Endothelial cell of umbilical vein (primary cell): ENCODE measurements at regions of chr4 and their contacts with region 1.

Region 1: DNA sequence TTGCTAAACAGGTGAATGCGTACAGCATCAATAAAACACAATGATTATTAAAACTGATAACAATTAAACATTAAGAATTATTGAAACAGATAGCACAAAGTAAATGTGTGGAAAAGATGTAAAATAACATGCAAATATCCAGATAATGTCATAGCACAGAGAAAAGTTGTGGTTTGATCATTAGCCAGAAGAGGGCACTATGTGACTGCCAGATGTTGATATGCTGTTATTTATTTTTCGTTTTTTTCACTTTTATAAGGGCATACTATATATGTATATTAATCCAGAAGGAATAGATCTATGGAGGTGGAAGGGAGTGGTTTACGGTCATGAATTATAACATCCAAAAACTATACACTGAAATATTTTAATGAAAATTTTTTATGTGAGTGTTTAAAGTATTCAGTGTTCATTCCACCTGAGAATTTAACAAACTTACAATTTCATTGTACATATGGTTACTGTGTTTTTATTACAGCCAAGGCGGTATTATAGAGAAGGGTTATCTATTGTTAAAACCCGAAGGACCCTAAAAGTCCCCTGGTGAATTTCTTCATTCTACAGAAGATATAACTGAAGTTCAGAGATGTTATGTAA is 211.9 kb upstream of the UGT8 start:
- DNase-seq: peak; percentile 59
- H3K4me3 ChIP-seq: no peak overlapping the region
- H3K27ac ChIP-seq: no peak overlapping the region
- H3K4me1 ChIP-seq: no peaks in the 10 kb centered on the region
- H3K27me3 ChIP-seq: peaks cover 5 to 11% of the 10 kb centered on the region in 2 experiments
- CTCF ChIP-seq: peak; percentile 37 to 50
- POLR2A ChIP-seq: no peak

Region 2: GRCh38 chr4:113878668-113879067 is 508.1 kb before region 1 on chr4:
- CTCF ChIA-PET with region 1: no interaction called
- POLR2A ChIA-PET with region 1: no interaction called
- dilution Hi-C with region 1: no loop called
- intact Hi-C with region 1: loop called (anchors 5 kb)
- DNase-seq: peak; percentile 40
- H3K4me3 ChIP-seq: no peak overlapping the region
- H3K27ac ChIP-seq: no peak overlapping the region
- H3K4me1 ChIP-seq: peaks cover 16% of the 10 kb centered on the region
- H3K27me3 ChIP-seq: no peaks in the 10 kb centered on the region
- CTCF ChIP-seq: peak; percentile 25 to 30
- POLR2A ChIP-seq: no peak

Region 3: GRCh38 chr4:114077610-114078009 is 309.1 kb before region 1 on chr4:
- CTCF ChIA-PET with region 1: no interaction called
- POLR2A ChIA-PET with region 1: no interaction called
- dilution Hi-C with region 1: no loop called
- intact Hi-C with region 1: loop called (anchors 5 kb)
- DNase-seq: peak; percentile 92
- H3K4me3 ChIP-seq: no peak overlapping the region
- H3K27ac ChIP-seq: peak overlapping the region; percentile 58
- H3K4me1 ChIP-seq: peaks cover 13% of the 10 kb centered on the region
- H3K27me3 ChIP-seq: no peaks in the 10 kb centered on the region
- CTCF ChIP-seq: no peak
- POLR2A ChIP-seq: no peak

Region 4: DNA sequence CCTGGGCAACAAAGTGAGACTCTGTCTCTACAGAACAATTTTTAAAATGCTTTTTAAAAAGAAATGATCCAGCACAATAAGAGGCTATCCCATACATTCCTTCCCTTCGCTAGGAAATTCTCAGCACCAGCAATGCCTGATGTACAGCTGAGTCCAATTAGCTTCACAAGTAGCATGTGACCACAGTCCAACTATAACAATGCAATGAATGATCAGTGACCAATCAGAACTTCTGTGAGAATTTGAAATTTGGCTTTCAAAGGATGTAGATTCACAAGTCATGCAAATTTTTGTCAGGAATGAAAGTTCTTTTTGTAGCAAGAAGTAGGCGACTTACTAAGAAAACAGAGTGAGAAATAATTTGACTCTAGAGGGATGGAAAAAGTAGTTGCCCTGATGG is 66.6 kb before region 1 on chr4:
- CTCF ChIA-PET with region 1: no interaction called
- POLR2A ChIA-PET with region 1: no interaction called
- dilution Hi-C with region 1: no loop called
- intact Hi-C with region 1: no loop called
- DNase-seq: no peak
- H3K4me3 ChIP-seq: no peak overlapping the region
- H3K27ac ChIP-seq: no peak overlapping the region
- H3K4me1 ChIP-seq: no peaks in the 10 kb centered on the region
- H3K27me3 ChIP-seq: no peaks in the 10 kb centered on the region
- CTCF ChIP-seq: no peak
- POLR2A ChIP-seq: no peak

Region 5: DNA sequence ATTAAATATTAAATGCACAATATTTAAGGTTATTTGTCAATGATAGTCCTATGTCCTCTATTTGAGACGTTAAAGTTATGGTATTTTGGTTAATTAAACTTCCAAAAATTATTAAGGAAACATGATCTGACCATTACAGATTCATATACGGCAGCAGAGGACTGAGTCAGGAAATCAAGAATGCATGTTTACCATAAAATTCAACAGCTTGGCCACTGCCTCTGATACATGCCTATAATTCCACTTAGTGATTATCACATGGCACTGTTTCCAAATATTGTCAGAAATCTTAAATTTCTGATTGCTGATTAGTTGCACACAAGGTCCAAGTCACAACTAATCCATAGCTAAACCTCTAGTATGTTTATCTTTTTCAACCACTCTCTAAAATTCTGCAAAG is 20.4 kb before region 1 on chr4:
- CTCF ChIA-PET with region 1: no interaction called
- POLR2A ChIA-PET with region 1: no interaction called
- dilution Hi-C with region 1: no loop called
- intact Hi-C with region 1: no loop called
- DNase-seq: no peak
- H3K4me3 ChIP-seq: no peak overlapping the region
- H3K27ac ChIP-seq: no peak overlapping the region
- H3K4me1 ChIP-seq: no peaks in the 10 kb centered on the region
- H3K27me3 ChIP-seq: no peaks in the 10 kb centered on the region
- CTCF ChIP-seq: no peak
- POLR2A ChIP-seq: no peak

Region 6: DNA sequence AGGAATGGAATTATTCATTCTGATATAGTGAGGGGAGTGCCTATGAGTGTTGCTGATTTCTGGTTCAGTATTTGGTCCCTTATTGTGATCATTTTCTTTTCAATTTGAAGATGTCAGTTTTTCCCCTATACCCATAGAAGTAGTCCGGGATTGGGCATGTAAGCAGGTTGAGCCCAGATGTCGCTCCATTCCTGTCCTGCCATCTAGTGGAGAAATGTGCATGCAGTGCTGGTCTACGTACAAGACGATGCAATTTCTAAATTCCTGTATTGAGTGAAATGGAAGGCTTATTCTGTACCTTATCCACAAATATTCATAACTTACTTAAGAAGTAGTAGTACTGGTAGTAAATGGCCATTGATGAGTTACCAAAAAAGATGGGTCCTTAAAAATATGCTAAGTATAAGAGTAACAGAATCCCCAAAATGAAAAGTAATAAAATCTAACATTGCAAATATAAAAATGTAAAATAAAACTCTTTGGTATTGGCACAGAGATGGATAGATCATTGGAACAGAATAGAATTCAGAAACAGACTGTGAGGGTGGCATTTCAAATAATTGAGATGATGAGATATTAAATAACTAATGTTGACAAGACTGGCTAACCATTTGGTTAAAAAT is 272.8 kb after region 1 on chr4:
- CTCF ChIA-PET with region 1: interaction called, 59 read pairs
- POLR2A ChIA-PET with region 1: no interaction called
- dilution Hi-C with region 1: no loop called
- intact Hi-C with region 1: loop called (anchors 1 kb)
- DNase-seq: peak; percentile 68
- H3K4me3 ChIP-seq: no peak overlapping the region
- H3K27ac ChIP-seq: no peak overlapping the region
- H3K4me1 ChIP-seq: no peaks in the 10 kb centered on the region
- H3K27me3 ChIP-seq: no peaks in the 10 kb centered on the region
- CTCF ChIP-seq: peak; percentile 71 to 74
- POLR2A ChIP-seq: no peak

Region 7: GRCh38 chr4:114807759-114808404 is 421.1 kb after region 1 on chr4:
- CTCF ChIA-PET with region 1: interaction called, 7 read pairs
- POLR2A ChIA-PET with region 1: no interaction called
- dilution Hi-C with region 1: no loop called
- intact Hi-C with region 1: loop called (anchors 1 kb)
- DNase-seq: peak; percentile 38
- H3K4me3 ChIP-seq: no peak overlapping the region
- H3K27ac ChIP-seq: no peak overlapping the region
- H3K4me1 ChIP-seq: no peaks in the 10 kb centered on the region
- H3K27me3 ChIP-seq: no peaks in the 10 kb centered on the region
- CTCF ChIP-seq: peak; percentile 71 to 78
- POLR2A ChIP-seq: no peak